ENCODE measurements at regions of chr11 and their contacts with region 1.

Region 1: DNA sequence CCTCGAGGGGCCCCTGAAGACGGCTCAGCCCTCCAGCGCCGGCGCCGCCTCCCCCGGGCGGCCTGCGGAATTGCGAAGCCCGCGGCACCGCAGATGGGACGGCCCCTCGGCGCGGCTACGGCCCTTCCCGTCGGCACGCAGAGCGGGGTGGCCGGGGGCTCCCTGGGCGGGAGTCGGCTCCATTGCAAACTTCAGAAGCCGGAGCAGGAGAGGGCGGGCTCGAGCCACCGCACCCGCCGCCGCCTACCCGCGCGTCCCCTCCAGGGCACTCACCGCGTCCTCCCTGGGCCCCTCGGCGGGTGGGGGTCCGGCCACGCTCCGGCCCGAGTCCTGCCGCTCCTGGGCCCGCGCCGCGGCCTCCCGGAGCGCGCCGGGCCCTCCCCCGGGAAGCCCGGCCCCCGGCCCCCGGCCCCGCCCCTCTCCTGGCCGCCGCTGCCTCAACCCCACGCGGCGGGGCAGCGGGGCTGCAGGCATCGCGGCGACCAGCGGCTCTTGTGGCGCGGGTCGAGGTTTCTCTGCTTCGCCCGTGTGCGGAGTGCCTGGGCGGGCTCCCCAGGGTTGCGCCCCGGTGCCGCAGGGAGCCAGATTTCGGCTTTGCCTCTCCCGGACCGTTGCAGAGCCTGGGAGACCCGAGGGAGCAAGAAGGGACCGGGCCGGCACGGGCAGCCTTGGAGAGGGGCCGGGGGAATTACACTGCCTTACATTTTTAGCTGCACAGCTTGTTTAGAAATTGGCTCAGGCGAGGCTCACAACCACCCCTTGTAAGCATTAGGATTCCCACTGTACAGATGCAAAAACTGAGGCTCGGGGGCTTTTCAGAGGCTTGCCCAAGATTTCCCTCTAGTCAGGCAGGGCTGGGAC is at the start of gene PACSIN3:
- DNase-seq: no peak
- total RNA-seq, gene PACSIN3: 295 TPM

Region 2: GRCh38 chr11:47099214-47099917 is 86.9 kb before region 1 on chr11:
- intact Hi-C with region 1: no loop called
- DNase-seq: no peak

Region 3: GRCh38 chr11:47213985-47214564 is 27.8 kb after region 1 on chr11:
- intact Hi-C with region 1: loop called (anchors 1 kb)
- DNase-seq: peak; percentile 96

Region 4: DNA sequence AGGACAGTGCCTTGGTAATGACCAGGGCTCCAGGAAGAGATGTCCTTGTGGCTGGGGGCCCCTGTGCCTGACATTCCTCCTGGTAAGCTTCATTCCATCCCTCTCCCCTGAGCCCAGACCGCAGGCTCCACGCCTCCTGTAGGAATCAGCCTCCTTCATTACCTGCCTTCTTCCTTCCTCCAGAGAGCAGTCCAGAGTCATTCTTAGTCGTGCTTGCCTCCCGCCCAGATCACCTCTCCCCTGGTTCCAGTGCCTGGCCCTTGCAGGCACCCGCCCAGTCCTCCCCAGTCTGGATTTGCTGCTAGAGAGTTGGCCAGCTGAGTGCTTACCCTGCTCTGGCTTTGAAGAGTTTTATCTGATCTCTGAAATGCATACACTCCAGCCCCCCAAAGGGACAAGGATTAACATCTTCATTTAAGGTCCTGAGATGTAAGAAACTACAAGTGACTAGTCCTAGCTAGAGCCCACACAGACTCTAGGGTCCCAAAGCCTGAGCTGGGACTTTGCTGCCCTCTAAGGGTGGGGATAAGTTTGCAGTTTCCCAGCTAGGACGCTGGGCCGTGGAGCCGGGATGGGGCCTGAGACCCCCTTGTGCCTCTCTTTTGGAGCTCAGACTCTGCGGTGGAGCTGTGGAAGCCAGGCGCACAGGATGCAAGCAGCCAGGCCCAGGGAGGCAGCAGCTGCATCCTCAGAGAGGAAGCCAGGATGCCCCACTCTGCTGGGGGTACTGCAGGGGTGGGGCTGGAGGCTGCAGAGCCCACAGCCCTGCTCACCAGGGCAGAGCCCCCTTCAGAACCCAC is 73.1 kb after region 1 on chr11:
- intact Hi-C with region 1: loop called (anchors 2 kb)
- DNase-seq: no peak

Region 5: GRCh38 chr11:47578524-47579460 is 392.5 kb after region 1 on chr11 and contains the starts of genes KBTBD4 and NDUFS3:
- intact Hi-C with region 1: no loop called
- DNase-seq: peak; percentile 95
- total RNA-seq, gene KBTBD4: 14.3 TPM
- total RNA-seq, gene NDUFS3: 234 TPM

Measured in cardiac septum (tissue), 1 donor.